T-cell (primary cell): ENCODE measurements at regions of chr6 and their contacts with region 1.

Region 1: DNA sequence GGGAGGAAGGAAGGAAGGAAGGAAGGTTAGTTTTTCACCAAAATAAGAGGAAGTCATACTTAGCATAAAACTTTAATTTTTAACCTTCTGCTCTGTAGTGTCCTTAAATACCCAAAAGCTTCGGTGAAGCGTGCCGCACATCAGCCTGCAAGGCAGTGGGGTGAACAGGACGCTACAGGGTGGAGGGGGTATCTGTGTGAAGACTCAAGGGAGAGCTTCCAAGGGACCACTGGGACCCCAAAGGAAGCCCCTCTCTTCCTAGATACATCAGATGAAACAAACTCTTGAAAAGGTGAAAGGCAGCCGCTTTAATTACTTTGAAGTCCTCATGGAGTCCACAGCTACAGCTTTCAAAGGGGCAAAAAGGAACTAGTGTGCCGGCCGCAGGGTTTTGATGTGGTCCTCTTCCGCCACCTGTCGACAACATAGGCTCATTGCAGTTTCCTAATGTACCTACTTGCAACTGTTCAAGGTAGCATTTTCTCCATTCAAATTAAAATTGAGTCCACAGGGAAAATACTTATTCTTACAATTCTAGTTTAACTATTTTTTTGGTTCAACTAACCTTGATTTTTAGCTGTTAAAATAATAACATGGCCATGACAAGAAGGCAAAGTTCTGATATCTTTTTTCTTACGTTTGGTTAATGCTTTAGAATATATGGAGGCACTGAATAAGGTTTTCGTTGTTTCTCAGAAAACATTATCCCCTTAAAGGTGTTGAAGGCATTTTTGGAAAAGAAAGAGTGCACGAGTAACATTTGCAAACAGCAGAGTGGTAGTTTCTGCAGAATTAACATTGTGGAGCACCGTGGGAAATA is 135.0 kb upstream of the RIPOR2 start:
- DNase-seq: peak; percentile 62 to 93 (median 76)
- ATAC-seq: peak; percentile 91 to 94 (median 94)
- H3K4me3 ChIP-seq: no peak overlapping the region
- H3K4me3 Mint-ChIP-seq: peak overlapping the region; percentile 28 to 59 (median 56)
- H3K27ac ChIP-seq: peak overlapping the region; percentile 61
- H3K27ac Mint-ChIP-seq: peak overlapping the region; percentile 87 to 89
- H3K4me1 ChIP-seq: peaks cover 0 to 5% of the 10 kb centered on the region in 2 experiments
- H3K4me1 Mint-ChIP-seq: peaks cover 4 to 9% (median 5%) of the 10 kb centered on the region in 3 donors
- H3K27me3 ChIP-seq: no peaks in the 10 kb centered on the region
- H3K27me3 Mint-ChIP-seq: no peaks in the 10 kb centered on the region

Region 2: DNA sequence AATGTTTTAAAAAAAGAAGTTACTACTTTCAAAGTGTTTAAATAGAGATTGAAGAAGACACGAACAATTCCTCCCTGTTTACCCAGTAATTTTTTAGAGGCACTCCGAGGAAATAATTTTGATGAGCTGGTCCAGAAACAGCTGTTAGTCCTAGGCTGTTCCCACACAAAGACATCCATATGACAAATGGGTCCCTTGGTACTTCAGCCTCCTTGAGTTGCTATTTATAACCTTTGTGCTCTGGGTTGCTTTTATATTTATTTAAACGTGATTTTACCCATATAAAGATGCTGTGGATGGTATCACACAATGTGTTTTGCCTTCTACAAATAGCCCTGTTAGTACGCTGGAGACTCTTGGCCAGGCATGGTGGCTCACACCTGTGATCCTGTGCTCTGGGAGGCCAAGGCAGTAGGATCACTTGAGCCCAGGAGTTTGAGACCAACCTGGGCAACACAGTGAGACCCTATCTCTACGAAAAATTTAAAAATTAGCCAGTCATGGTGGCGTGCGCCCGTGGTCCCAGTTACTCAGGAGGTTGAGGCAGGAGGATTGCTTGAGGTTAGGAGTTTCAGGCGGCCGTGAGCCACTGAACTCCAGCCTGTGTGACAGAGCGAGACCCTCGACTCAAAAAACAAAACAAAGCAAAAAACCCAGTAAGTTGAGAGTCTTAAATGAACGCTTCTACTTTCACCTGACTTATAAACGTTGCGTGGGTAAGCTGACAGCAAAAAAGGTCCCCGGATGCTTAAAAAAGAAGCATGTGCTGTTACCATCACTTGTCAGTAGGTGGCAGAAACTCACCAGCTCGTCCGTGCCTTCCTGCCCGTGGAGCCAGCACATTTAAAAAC is 215.1 kb before region 1 on chr6:
- CTCF ChIA-PET with region 1: interaction called in 1 of 2 experiments, 21 read pairs
- POLR2A ChIA-PET with region 1: no interaction called
- DNase-seq: peak in 34 of 35 experiments; percentile 47 to 90 (median 64)
- ATAC-seq: peak; percentile 32 to 59 (median 50)
- H3K4me3 ChIP-seq: no peak overlapping the region
- H3K4me3 Mint-ChIP-seq: peak overlapping the region in 1 of 3 donors; percentile 73
- H3K27ac ChIP-seq: peak overlapping the region; percentile 76
- H3K27ac Mint-ChIP-seq: peak overlapping the region; percentile 95 to 99
- H3K4me1 ChIP-seq: peaks cover 42 to 47% of the 10 kb centered on the region in 2 experiments
- H3K4me1 Mint-ChIP-seq: peaks cover 52 to 72% (median 59%) of the 10 kb centered on the region in 3 donors
- H3K27me3 ChIP-seq: no peaks in the 10 kb centered on the region
- H3K27me3 Mint-ChIP-seq: no peaks in the 10 kb centered on the region

Region 3: GRCh38 chr6:25035527-25036435 is 35.0 kb before region 1 on chr6:
- CTCF ChIA-PET with region 1: interaction called in 1 of 2 experiments, 16 read pairs
- POLR2A ChIA-PET with region 1: interaction called in 1 of 2 experiments, 3 read pairs
- DNase-seq: peak in 1 of 35 experiments; percentile 56
- ATAC-seq: peak; percentile 43 to 62 (median 56)
- H3K4me3 ChIP-seq: peak overlapping the region; percentile 25 to 31
- H3K4me3 Mint-ChIP-seq: peak overlapping the region; percentile 76 to 82 (median 79)
- H3K27ac ChIP-seq: peak overlapping the region; percentile 82
- H3K27ac Mint-ChIP-seq: peak overlapping the region; percentile 90 to 100
- H3K4me1 ChIP-seq: peaks cover 33 to 52% of the 10 kb centered on the region in 2 experiments
- H3K4me1 Mint-ChIP-seq: peaks cover 71 to 76% (median 75%) of the 10 kb centered on the region in 3 donors
- H3K27me3 ChIP-seq: no peaks in the 10 kb centered on the region
- H3K27me3 Mint-ChIP-seq: no peaks in the 10 kb centered on the region

Region 4: DNA sequence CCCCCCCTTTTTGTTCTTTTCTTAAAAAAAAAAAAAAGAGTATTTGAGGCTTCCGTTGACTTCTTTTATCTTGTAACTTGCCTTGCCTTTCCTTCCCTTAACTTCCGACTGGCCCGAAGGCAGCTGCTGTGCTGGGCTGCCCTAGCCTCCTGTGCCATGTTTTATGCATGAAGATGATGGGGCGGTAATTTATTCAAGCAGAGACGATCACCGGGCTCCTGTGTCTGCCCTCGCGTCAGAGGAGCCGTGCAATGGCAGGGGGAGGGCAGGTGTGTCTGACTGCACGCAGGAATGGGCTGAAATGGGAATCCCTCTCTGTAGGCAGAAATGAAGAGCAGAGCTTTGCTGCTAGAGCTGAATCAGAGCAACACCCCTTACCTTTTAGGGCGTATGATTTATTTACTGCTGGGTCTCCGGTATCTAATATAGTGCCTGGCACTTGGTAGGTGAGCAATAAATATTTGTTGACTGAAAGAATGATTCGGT is 28.7 kb before region 1 on chr6:
- CTCF ChIA-PET with region 1: interaction called in 1 of 2 experiments, 26 read pairs
- POLR2A ChIA-PET with region 1: interaction called in 1 of 2 experiments, 9 read pairs
- DNase-seq: peak in 34 of 35 experiments; percentile 18 to 75 (median 37)
- ATAC-seq: peak; percentile 62 to 78 (median 72)
- H3K4me3 ChIP-seq: peak overlapping the region; percentile 75 to 80
- H3K4me3 Mint-ChIP-seq: peak overlapping the region; percentile 95 to 100 (median 98)
- H3K27ac ChIP-seq: peak overlapping the region; percentile 93
- H3K27ac Mint-ChIP-seq: peak overlapping the region; percentile 95 to 100
- H3K4me1 ChIP-seq: peaks cover 30 to 53% of the 10 kb centered on the region in 2 experiments
- H3K4me1 Mint-ChIP-seq: peaks cover 63 to 70% (median 64%) of the 10 kb centered on the region in 3 donors
- H3K27me3 ChIP-seq: no peaks in the 10 kb centered on the region
- H3K27me3 Mint-ChIP-seq: no peaks in the 10 kb centered on the region